Natural killer cell (primary cell): ENCODE measurements at regions of chr2 and their contacts with region 1.

Region 1: DNA sequence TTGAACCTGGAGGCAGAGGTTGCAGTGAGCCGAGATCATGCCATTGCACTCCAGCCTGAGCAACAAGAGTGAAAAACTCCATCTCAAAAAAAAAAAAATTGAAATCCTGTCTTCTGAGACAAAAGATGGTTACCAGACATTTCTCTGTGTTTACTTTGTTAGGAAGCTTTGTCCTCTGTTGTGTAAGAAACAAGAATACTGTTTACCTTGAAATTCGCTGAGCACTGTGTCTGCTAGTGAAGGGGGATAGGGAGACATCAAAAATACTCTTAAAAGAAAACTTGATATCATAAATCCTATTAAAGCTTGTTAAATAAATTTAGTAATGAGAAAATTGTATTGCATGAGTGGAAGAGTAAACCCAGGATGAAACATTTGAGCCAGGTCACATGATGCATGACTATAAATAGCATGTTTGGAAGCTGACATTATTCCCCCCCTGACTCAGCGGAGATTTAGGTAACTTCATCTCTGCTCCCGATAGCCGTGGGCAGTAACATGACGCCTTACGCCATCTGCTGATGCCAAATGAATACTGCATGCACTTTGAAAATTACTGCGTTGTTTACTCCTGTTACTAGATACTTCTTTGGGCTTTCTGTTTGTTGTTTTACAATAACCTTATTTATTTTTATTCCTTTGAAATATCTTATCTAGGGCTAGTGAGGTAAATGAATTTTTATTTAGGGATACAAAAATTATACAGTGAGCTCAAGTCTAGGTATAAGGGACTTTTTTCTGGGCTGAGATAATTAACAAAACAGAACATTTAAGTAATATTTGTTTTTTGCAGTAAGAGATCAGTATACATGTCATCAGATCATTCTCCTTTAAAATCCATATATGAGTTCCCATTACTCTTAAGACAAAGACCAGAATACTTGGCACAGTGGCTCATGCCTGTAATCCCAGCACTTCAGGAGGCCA is 134.9 kb downstream of the MAP3K20 start:
- DNase-seq: peak in 1 of 2 donors; percentile 80
- ATAC-seq: peak; percentile 85 to 90 (median 90)
- H3K4me3 ChIP-seq: no peak overlapping the region
- H3K4me3 Mint-ChIP-seq: no peak overlapping the region
- H3K27ac ChIP-seq: no peak overlapping the region
- H3K27ac Mint-ChIP-seq: no peak overlapping the region
- H3K4me1 ChIP-seq: no peaks in the 10 kb centered on the region
- H3K4me1 Mint-ChIP-seq: no peaks in the 10 kb centered on the region
- H3K27me3 ChIP-seq: no peaks in the 10 kb centered on the region
- H3K27me3 Mint-ChIP-seq: no peaks in the 10 kb centered on the region
- CTCF ChIP-seq: peak; percentile 85

Region 2: GRCh38 chr2:172698041-172698863 is 512.3 kb before region 1 on chr2:
- intact Hi-C with region 1: no loop called
- DNase-seq: peak in 1 of 2 donors; percentile 10
- ATAC-seq: no peak
- H3K4me3 ChIP-seq: no peak overlapping the region
- H3K4me3 Mint-ChIP-seq: no peak overlapping the region
- H3K27ac ChIP-seq: no peak overlapping the region
- H3K27ac Mint-ChIP-seq: no peak overlapping the region
- H3K4me1 ChIP-seq: no peaks in the 10 kb centered on the region
- H3K4me1 Mint-ChIP-seq: peaks cover 0 to 6% of the 10 kb centered on the region in 2 donors
- H3K27me3 ChIP-seq: peaks cover 3% of the 10 kb centered on the region
- H3K27me3 Mint-ChIP-seq: peaks cover 3 to 9% of the 10 kb centered on the region in 2 donors
- CTCF ChIP-seq: no peak

Region 3: GRCh38 chr2:173027181-173028128 is 183.1 kb before region 1 on chr2:
- intact Hi-C with region 1: loop called (anchors 1 kb)
- DNase-seq: peak; percentile 54 to 90
- ATAC-seq: peak; percentile 72 to 87 (median 84)
- H3K4me3 ChIP-seq: no peak overlapping the region
- H3K4me3 Mint-ChIP-seq: no peak overlapping the region
- H3K27ac ChIP-seq: no peak overlapping the region
- H3K27ac Mint-ChIP-seq: no peak overlapping the region
- H3K4me1 ChIP-seq: no peaks in the 10 kb centered on the region
- H3K4me1 Mint-ChIP-seq: no peaks in the 10 kb centered on the region
- H3K27me3 ChIP-seq: peaks cover 2% of the 10 kb centered on the region
- H3K27me3 Mint-ChIP-seq: peaks cover 20 to 26% of the 10 kb centered on the region in 2 donors
- CTCF ChIP-seq: peak; percentile 98

Region 4: DNA sequence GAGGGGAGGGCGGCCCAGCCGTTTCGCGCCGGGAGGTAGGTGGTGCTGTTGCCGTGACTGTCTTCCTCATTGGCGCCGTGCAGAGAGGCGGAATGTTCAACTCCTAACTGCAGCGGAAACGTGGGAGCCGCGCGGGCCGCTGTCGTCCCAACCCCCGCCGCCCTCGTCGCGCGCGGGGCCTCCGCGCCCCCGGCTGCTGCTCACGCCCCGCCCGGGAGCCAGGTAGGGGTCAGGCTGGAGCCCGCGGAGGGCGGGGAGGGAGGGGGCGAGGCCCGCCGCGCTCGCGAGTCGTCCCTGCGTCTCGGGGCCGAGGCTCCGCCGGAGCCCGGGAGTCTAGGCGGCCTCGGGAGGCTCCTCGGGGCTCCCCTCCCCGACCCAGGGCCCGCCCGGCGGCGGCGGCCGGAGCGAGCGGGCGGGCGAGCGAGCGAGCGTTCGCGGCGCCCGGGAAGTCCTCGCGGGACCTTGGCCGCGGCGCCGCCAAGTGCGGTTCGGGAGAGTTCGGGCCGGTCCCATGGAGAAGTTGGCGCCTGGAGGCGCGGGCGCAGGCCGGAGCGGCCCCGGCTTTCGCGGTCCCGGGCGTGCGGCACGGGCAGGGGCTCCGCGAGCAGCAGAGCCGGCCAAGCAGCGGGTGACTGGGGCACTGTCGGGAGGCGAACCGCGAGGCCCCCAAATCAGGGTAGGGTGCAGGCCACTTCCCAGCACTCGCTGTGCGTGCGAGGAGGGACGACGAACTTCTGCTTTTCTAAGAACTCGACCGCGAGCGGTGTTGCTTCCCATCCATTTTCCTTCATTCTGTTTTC is 134.6 kb before region 1 on chr2 and contains the start of gene MAP3K20:
- intact Hi-C with region 1: loop called (anchors 2 kb)
- DNase-seq: peak; percentile 36 to 73
- ATAC-seq: peak; percentile 79 to 83 (median 80)
- H3K4me3 ChIP-seq: peak within 1 kb of the TSS; percentile 33
- H3K4me3 Mint-ChIP-seq: peak within 1 kb of the TSS; percentile 91
- H3K27ac ChIP-seq: no peak within 1 kb of the TSS
- H3K27ac Mint-ChIP-seq: peak within 1 kb of the TSS in 1 of 2 donors; percentile 57
- H3K4me1 ChIP-seq: peaks cover 10% of the 10 kb centered on the region
- H3K4me1 Mint-ChIP-seq: peaks cover 6 to 14% of the 10 kb centered on the region in 2 donors
- H3K27me3 ChIP-seq: peaks cover 2% of the 10 kb centered on the region
- H3K27me3 Mint-ChIP-seq: peaks cover 6 to 9% of the 10 kb centered on the region in 2 donors
- CTCF ChIP-seq: peak; percentile 17
- total RNA-seq, gene MAP3K20: 1.6 to 3.0 (median 2.5) TPM

Region 5: DNA sequence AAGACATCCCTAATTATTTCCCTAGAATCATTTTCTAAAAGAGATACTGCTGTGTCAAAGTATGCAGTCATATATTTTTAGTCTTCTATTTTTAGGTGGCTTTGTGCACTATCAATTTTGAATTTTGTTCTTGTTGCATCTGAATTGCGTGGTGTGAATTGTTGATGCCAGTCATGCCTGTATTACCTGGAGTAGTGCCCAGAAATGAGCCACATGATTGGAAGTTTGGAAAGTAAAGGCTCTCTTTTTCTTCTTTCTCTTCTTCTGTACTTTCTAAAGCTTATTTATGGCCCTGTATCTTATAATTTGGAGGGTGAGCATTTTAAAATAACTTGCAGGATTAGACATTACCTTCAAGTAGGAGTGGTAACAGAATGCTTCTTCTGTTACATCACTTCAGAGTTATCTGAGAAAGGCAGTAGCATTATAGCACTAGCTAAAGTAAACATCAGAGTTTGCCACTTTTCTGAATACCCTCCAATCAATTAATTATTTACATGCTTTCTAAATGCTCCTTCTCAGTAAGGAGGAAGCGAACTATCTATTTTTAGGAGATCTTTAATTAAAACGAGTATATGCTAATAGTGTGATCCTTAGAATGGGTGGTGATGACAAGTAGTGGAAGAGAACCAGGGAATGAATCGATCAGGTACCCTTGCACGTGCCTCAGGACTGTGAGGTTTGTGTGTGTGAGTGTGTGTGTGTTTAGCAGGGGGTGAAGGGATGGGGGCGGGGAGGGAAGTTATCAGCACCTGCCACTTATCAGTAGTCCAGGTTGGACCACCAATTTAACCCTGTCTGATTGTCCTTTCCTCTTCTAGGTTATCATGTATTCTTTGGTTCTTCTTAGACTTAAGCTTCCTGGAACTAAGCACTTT is 22.4 kb before region 1 on chr2:
- intact Hi-C with region 1: no loop called
- DNase-seq: no peak
- ATAC-seq: no peak
- H3K4me3 ChIP-seq: no peak overlapping the region
- H3K4me3 Mint-ChIP-seq: no peak overlapping the region
- H3K27ac ChIP-seq: no peak overlapping the region
- H3K27ac Mint-ChIP-seq: no peak overlapping the region
- H3K4me1 ChIP-seq: no peaks in the 10 kb centered on the region
- H3K4me1 Mint-ChIP-seq: no peaks in the 10 kb centered on the region
- H3K27me3 ChIP-seq: no peaks in the 10 kb centered on the region
- H3K27me3 Mint-ChIP-seq: no peaks in the 10 kb centered on the region
- CTCF ChIP-seq: no peak

Region 6: GRCh38 chr2:173231042-173231441 is 20.5 kb after region 1 on chr2:
- intact Hi-C with region 1: no loop called
- DNase-seq: peak in 1 of 2 donors; percentile 8
- ATAC-seq: no peak
- H3K4me3 ChIP-seq: no peak overlapping the region
- H3K4me3 Mint-ChIP-seq: no peak overlapping the region
- H3K27ac ChIP-seq: no peak overlapping the region
- H3K27ac Mint-ChIP-seq: no peak overlapping the region
- H3K4me1 ChIP-seq: no peaks in the 10 kb centered on the region
- H3K4me1 Mint-ChIP-seq: no peaks in the 10 kb centered on the region
- H3K27me3 ChIP-seq: no peaks in the 10 kb centered on the region
- H3K27me3 Mint-ChIP-seq: peaks cover 0 to 4% of the 10 kb centered on the region in 2 donors
- CTCF ChIP-seq: no peak